Activated CD4-positive, alpha-beta T cell treated with anti-CD3 and anti-CD28 coated beads for 36 hours (primary cell): ENCODE measurements at regions of chr1 and their contacts with region 1.

Region 1: DNA sequence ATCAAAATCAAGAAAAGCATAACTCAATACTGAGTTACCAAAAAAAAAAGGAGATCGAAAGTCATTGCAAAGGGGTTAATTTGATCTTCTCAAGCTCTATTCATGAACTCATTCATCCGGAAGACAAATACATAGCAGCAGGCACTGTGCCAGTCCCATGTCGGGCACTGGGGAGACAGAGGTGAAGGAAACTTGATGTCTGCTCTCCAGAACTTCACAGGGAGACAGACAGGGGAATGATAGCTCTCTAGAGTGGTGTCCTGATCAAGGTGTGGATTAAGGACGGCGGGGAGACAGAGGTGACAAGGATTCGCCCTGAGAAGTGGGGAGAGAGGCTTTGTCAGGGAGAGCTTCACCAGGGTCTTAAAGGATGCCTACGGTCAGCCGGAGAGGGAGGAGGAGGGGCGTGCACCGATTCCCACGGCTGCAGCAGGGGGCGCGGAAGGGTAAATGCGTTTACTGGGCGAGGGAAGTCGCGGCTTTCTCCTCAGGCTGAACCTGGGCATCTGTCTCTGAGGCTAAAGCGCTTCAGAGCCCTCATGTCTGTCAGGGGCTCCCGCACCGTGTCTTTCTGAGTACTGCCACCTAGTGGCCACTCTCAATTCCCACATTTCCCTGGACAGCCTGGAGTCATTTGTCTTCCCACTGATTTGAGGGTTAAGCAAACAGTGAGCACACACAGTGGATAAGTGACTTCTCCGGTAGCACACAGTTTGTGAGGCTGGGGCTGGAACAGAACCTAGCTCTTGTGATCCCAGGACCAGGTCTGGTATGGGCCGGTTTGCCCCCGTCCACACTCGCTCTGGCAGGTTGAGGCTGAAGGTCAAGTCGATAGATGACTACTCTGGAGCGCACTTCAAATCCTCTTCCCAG is 152.8 kb downstream of the TENT5C start:
- DNase-seq: peak; percentile 81
- ATAC-seq: peak; percentile 95
- H3K4me3 Mint-ChIP-seq: peak overlapping the region; percentile 63
- H3K27ac Mint-ChIP-seq: peak overlapping the region; percentile 52
- H3K4me1 Mint-ChIP-seq: peaks cover 9% of the 10 kb centered on the region
- H3K27me3 Mint-ChIP-seq: peaks cover 15% of the 10 kb centered on the region

Region 2: GRCh38 chr1:117512743-117513321 is 245.8 kb before region 1 on chr1:
- CTCF ChIA-PET with region 1: interaction called, 156 read pairs
- POLR2A ChIA-PET with region 1: no interaction called
- intact Hi-C with region 1: loop called (anchors 1 kb)
- DNase-seq: no peak
- ATAC-seq: no peak
- H3K4me3 Mint-ChIP-seq: no peak overlapping the region
- H3K27ac Mint-ChIP-seq: no peak overlapping the region
- H3K4me1 Mint-ChIP-seq: peaks cover 3% of the 10 kb centered on the region
- H3K27me3 Mint-ChIP-seq: no peaks in the 10 kb centered on the region

Region 3: DNA sequence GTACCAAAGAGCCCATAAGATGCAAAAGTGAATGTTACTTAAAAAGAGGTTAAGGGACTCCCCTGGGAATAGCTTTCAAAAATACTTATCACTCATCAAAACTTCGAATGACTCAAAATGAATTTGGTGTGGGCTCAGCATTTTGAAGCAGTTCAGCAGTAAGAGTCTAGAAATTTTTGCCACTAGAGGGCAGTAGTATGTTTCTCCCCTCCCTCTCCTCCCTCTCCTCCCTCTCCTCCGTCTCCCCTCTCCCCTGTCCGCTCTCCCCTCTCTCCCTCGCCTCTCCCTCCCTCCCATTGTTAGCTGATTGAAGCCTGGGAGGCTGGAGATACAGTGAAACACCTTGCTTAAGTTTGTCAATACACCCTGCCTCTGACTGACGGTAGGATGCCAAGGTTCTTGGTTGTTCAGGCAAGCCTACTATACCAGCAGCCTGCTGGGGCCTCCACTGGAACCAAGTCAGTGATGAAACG is 223.6 kb before region 1 on chr1:
- CTCF ChIA-PET with region 1: interaction called, 164 read pairs
- POLR2A ChIA-PET with region 1: interaction called, 3 read pairs
- intact Hi-C with region 1: loop called (anchors 1 kb)
- DNase-seq: peak; percentile 48
- ATAC-seq: peak; percentile 81
- H3K4me3 Mint-ChIP-seq: no peak overlapping the region
- H3K27ac Mint-ChIP-seq: no peak overlapping the region
- H3K4me1 Mint-ChIP-seq: peaks cover 25% of the 10 kb centered on the region
- H3K27me3 Mint-ChIP-seq: peaks cover 2% of the 10 kb centered on the region

Region 4: DNA sequence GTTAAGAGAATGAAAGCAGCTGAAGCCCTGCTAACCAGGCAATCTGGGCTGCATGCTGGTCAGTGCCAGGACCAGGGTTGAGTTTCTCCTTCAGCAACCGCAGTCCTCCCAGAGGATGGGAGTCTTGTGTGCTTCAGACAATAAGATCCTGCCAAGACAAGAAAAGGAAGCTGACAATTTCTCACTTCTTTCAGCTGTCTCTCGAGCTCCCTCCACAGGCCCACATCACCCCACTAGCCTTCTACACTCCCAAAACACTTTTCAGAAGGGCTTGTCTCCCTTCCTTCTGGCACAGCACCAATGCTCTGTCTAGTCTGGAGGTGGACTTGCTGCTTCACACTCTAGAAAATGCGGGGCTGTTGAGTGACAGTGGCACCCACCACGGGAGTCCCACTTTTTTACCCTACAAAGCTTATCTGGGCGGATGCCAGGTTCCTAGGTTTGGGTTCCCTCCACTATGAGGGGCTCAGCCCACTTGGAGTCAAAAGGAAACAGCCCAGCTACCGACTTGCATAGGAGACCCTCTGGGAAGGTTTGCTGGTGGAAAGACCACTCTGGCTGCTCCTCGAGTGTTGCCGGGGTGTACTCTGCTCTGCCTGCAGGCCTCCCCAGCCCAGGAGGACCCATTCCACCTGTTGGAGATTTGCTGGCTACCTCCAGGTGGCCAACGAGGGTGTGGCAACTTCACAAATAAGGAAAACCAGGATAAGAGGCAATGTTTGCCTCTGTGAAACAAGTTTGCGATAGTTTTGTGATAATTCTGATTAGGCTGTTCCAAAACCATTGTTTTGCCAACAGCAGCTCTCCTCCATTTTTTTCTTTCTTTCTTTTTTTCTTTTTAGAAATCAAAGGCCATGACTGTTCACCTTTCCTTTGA is 83.9 kb before region 1 on chr1:
- CTCF ChIA-PET with region 1: interaction called, 9 read pairs
- POLR2A ChIA-PET with region 1: no interaction called
- intact Hi-C with region 1: loop called in 1 of 2 experiments (anchors 5 kb)
- DNase-seq: peak; percentile 67
- ATAC-seq: peak; percentile 72
- H3K4me3 Mint-ChIP-seq: no peak overlapping the region
- H3K27ac Mint-ChIP-seq: no peak overlapping the region
- H3K4me1 Mint-ChIP-seq: peaks cover 16% of the 10 kb centered on the region
- H3K27me3 Mint-ChIP-seq: no peaks in the 10 kb centered on the region

Region 5: DNA sequence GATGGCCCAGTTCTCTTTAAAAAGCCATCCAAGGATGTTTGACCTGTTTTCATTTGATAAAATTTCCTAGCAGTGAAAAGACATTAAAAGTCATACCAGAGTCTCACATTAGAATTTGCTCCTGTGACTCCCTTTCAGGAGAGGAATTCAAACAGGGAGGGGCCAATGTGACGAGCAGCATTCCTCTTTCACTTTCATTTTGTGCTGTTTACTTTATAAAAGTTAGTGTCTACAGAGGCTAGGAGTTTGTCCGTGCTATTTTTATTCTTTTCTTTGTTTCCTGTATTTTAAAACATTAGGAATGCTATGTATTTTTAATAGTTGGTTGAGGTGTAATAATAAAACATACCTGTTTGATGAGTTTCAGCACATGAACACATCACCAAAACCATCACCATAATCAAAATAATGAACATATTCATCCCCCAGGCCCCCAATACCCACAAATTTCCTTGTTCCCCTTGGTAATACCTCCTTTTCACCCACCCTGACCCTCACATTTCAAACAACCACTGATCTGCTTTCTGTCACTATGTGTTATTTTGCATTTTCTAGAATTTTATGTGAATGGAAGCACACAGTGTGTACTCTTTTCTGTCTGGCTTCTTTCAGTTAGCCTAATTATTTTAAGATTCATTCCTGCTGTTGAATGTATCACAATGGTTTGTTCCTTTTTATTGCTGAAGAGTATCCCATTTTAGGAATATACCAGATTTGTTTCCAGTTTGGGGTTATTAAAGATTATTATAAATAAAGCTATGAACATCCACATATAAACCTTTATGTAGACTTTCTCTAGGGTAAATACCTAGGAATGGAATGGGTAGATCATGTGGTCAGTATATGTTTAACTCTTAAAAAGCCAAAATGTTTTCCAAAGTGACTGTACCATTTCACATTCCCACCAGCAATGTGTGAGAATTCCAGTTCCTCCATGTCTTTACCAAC is 23.4 kb before region 1 on chr1:
- CTCF ChIA-PET with region 1: interaction called, 21 read pairs
- POLR2A ChIA-PET with region 1: no interaction called
- intact Hi-C with region 1: no loop called
- DNase-seq: peak; percentile 51
- ATAC-seq: peak; percentile 74
- H3K4me3 Mint-ChIP-seq: peak overlapping the region; percentile 54
- H3K27ac Mint-ChIP-seq: peak overlapping the region; percentile 93
- H3K4me1 Mint-ChIP-seq: peaks cover 4% of the 10 kb centered on the region
- H3K27me3 Mint-ChIP-seq: no peaks in the 10 kb centered on the region

Region 6: DNA sequence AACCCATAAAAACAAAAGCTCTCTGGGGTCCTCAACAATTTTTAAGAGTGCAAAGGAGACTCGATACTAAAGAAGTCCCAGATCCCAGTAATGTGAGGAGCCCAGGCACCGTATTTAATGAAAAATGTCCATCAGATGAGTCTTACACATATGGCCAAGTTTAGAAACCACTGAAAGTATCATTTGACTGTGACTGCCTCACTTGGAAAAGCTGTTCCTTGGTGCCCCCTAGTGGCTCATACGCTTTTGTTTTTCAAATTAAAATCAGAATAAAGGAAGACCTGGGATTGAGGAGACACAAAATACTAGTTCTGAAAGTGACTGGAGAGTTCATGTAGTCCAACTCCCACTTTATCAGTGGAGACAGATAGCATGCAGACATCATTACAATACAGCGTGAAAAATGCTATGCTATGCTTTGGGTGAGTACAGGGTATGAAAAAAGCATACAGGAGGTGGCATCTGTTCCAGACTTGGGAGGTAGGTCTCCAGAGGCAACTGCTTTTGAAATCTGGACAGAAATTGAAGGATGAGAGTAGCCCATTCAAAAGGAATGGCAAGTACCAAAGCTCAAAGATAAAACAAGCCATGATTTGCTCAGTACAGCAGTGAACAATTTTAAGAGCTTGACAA is 136.9 kb after region 1 on chr1:
- CTCF ChIA-PET with region 1: interaction called, 15 read pairs
- POLR2A ChIA-PET with region 1: no interaction called
- intact Hi-C with region 1: loop called in 1 of 2 experiments (anchors 1 kb)
- DNase-seq: peak; percentile 77
- ATAC-seq: peak; percentile 91
- H3K4me3 Mint-ChIP-seq: no peak overlapping the region
- H3K27ac Mint-ChIP-seq: no peak overlapping the region
- H3K4me1 Mint-ChIP-seq: peaks cover 4% of the 10 kb centered on the region
- H3K27me3 Mint-ChIP-seq: no peaks in the 10 kb centered on the region